ENCODE measurements at regions of chr1 and their contacts with region 1.

Region 1: DNA sequence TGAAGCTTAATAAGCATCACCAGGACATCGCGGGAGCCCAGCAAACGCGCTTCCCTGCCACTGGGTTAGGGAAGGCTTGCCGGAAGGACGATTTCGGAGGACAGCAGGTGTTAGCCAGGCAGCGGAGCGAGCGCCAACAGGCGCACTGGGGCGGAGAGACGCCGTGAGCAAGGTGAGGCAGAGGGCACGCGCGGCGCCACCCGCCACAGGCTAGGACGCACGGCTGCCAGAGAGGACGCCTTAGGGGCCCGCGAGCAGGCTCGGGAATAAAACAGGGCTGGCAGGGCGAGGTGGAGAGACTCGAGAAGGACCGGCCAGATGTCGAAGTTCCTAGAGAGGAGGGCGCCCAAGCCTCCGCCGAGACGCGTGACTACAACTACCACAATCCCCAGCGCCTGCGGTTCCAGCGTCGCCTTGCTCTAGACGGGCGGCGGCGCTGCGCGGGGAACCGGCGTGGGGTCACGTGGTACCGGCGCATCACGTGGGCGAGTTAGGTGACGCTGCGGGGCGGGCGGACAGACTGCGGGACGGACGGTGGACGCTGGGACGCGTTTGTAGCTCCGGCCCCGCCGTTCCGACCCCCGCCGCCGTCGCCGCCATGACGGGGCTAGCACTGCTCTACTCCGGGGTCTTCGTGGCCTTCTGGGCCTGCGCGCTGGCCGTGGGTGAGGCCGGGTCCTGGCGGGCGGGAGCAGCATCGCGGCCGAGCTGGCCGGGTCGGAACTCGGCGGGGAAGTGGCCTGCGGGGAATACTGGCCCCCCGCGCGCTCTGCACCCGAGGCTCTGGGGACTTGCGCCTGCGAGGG is at the start of gene ATP6V0B:
- DNase-seq: peak; percentile 95 to 96
- ATAC-seq: peak; percentile 75 to 78
- H3K4me3 ChIP-seq: peak within 1 kb of the TSS; percentile 84 to 100 (median 96)
- H3K27ac ChIP-seq: peak within 1 kb of the TSS; percentile 94 to 98 (median 97)
- H3K4me1 ChIP-seq: peaks cover 38 to 66% of the 10 kb centered on the region in 2 donors
- H3K27me3 ChIP-seq: no peaks in the 10 kb centered on the region
- CTCF ChIP-seq: peak; percentile 17 to 60 (median 37)
- POLR2A ChIP-seq: peak; percentile 95 to 98
- total RNA-seq, gene ATP6V0B: 156 to 242 (median 195) TPM

Region 2: DNA sequence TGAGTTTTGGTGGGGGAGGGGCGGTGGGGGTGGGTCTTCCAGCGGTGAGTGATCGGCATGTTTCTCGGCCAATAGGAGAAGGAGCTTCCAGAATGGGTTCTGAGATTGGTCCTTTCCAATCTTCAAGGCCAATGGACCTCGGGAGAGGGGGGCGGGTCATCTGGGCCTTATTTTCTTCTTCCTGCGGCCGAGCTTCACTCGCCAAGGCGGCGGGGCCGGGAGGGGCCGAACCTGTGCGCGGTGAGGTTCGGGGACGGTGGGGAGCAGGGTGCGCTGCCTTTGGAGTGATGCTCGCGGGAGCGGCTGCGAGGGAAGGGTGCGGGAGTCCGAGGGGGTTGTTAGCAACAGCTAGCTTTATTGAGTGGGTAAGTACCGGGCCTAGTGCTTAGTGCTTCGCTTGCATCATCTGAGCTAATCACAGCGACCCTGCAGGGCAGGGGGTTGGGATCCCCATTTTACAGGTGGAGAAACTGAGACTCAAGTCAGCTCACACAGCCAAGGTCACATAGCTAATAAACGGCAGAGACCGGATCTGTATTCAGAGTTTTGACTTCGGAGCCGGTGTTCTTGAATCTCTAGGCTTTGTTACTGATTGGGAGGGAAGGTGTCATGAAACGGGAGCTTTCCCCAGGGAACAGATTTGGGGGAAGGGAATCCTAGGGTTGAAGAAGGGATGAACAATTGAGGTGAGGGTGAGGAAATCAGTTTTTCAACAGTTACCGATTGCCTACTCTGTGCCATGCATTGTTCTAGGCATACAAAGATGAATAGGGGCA is 324.1 kb before region 1 on chr1:
- in situ Hi-C with region 1: no loop called
- intact Hi-C with region 1: loop called (anchors 1 kb)
- DNase-seq: peak; percentile 97
- ATAC-seq: peak; percentile 97
- H3K4me3 ChIP-seq: peak overlapping the region; percentile 85 to 93 (median 90)
- H3K27ac ChIP-seq: peak overlapping the region; percentile 92 to 99 (median 96)
- H3K4me1 ChIP-seq: peaks cover 15 to 23% of the 10 kb centered on the region in 2 donors
- H3K27me3 ChIP-seq: no peaks in the 10 kb centered on the region
- CTCF ChIP-seq: no peak
- POLR2A ChIP-seq: peak; percentile 92 to 94

Region 3: DNA sequence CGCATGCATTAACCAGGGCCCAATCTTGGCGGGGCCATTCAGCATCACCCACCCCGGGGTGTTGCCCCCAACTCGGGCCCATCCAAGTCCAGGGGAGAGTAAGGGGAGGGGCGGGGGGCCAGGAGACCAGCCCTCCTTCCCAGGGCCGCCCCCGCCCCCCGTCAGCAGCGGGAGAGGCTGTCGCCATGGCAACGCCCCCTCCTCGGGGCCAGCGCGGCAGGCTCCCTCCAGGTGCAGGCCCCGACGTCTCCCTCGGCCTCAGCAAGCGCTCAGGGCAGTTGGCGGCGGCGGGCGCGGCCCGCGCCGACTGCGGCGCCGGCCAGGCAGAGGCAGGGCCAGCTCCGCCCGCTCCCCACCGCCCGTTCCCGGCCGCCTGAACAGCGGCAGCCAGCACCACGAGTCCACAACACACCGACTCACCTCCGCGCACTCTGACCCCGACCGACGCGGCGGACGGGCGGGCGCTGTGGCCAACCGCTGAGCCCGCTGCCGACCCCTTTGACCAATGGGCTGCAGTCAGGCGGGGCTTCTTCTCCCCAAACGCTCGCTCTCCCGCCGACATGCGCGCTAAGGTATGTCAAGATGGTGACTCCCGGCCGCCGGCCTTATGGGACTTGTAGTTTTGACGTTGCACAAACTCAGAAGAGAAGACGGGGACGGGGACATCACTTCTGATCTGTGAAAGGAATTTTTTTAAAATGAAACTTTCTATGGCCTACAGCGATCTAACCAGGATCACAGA is 380.4 kb after region 1 on chr1 and contains the start of gene ERI3:
- in situ Hi-C with region 1: no loop called
- intact Hi-C with region 1: loop called (anchors 10 kb)
- DNase-seq: peak; percentile 98
- ATAC-seq: peak; percentile 99
- H3K4me3 ChIP-seq: peak within 1 kb of the TSS; percentile 63 to 97 (median 88)
- H3K27ac ChIP-seq: peak within 1 kb of the TSS; percentile 80 to 91 (median 84)
- H3K4me1 ChIP-seq: peaks cover 20 to 27% of the 10 kb centered on the region in 2 donors
- H3K27me3 ChIP-seq: no peaks in the 10 kb centered on the region
- CTCF ChIP-seq: no peak
- POLR2A ChIP-seq: peak; percentile 92 to 93
- total RNA-seq, gene ERI3: 53.8 to 101 (median 79.8) TPM

Region 4: DNA sequence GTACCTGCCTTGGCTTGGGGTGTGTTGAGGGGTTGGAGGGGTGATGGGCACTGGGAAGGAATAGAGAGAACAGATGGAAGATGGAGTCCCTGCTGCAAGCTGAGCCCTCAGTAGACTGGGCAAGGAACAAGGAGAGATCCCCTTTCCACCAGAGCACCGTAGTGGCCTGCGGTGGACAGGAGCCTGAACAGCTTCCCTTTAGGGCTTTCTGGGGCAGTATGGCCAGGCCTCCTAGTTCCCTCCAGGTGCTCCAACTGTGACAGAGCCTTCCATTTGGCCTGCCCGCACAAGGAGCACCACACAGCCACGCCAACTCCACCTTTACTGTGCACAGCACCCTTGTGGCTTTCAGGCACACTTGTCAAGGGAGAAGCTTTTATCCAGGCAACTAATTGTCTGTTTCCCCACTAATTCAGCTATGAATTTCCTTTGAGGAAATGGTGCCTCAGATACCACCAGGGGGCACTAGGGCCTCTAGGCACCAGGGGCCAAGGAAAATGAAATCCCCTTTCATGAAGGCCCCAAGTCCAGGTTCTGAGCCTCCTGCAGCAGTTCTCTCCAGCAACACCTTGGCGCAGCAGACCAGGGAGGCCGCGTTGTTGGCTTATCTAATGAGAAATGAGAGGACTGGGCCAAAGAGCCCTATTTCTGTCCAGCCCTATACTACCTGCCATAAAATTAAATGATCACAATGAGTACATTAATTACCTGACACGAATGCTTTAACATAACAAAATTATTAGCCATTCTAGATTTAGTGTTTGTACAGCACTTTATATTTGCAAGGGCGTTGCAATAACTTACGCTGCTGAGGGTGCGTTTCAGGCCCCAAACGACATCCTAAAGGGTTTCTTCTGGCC is 403.5 kb after region 1 on chr1:
- in situ Hi-C with region 1: no loop called
- intact Hi-C with region 1: no loop called
- DNase-seq: no peak
- ATAC-seq: no peak
- H3K4me3 ChIP-seq: no peak overlapping the region
- H3K27ac ChIP-seq: no peak overlapping the region
- H3K4me1 ChIP-seq: no peaks in the 10 kb centered on the region
- H3K27me3 ChIP-seq: no peaks in the 10 kb centered on the region
- CTCF ChIP-seq: peak; percentile 9 to 58 (median 54)
- POLR2A ChIP-seq: no peak